Activated CD8-positive, alpha-beta memory T cell treated with anti-CD3 and anti-CD28 coated beads, Interleukin-2, amount 10 ng/mL, durations not matched to agents 7 days and 5 days (primary cell): ENCODE measurements at regions of chr3 and their contacts with region 1.

Region 1: DNA sequence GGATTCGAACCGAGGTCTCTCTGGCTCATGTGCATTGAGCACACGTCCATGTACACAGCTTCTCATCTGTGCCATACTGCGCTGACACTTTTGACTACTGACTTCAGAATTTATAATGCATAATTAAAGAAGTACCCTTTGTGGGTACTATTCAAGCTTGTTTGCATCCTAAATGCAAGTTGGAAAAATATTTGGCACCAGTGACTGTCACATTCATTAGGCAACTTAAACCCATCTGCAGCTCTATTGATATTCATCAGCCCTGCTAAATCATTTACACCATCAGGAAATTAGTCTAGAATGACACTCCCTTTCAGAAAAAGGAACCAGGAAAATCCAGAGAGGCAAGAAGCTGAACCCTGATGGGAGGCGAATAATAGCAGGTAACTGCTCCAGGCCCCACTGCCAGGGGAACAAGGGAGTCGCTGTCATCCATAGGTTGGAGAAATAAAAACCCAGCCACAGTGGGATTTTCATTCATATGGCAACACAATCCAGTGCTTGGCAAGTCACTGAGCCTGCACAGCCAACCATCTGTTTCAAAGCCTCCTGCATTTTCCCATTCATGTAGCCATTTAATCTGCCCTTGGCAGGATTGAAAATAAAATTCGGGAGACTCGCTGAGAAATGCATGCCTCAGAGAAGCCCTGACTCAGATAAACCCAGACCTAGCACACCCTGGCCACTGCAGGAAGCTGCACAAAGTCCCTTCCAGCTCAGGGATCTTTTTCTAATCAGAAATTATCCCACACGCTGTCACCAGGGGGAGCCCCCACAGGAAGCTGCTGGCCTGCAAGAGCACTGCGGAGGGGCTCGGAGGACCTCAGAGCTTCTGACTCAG is 103.0 kb upstream of the VEPH1 start:
- DNase-seq: peak; percentile 77
- ATAC-seq: peak; percentile 89
- H3K4me3 Mint-ChIP-seq: no peak overlapping the region
- H3K27ac Mint-ChIP-seq: no peak overlapping the region
- H3K4me1 Mint-ChIP-seq: peaks cover 4% of the 10 kb centered on the region
- H3K27me3 Mint-ChIP-seq: peaks cover 9% of the 10 kb centered on the region

Region 2: DNA sequence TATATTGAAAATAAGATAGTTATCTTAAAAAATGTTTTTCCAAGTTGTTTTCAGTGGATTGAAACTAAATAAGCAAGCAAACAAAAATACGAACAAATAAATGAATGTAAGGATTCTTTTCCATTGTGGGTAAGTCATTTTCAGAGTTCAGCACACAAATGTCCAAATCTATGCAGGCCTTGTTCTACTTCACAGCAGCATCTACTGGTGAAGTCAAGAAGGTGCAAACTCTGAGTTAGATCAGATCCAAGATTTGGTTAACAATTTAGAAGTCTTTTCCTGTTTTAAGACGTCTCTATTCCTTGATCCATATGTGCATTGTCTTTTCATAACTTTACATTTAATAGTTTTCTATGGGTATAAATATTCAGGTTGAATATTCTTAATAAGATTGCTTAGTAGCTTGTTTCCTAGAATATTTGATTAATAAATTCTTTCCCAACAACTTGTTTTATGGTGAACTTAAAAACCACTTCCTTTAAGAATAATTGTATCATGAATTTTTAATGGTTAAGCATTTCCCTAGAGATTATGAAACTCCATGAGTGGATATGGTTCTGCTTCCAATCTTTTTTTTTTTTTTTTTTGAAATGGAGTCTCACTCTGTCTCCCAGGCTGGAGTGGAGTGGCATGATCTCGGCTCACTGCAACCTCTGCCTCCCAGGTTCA is 159.1 kb before region 1 on chr3:
- CTCF ChIA-PET with region 1: no interaction called
- DNase-seq: no peak
- ATAC-seq: no peak
- H3K4me3 Mint-ChIP-seq: no peak overlapping the region
- H3K27ac Mint-ChIP-seq: no peak overlapping the region
- H3K4me1 Mint-ChIP-seq: no peaks in the 10 kb centered on the region
- H3K27me3 Mint-ChIP-seq: peaks cover 6% of the 10 kb centered on the region

Region 3: GRCh38 chr3:157618886-157619285 is 12.7 kb after region 1 on chr3:
- CTCF ChIA-PET with region 1: interaction called, 12 read pairs
- DNase-seq: no peak
- ATAC-seq: no peak
- H3K4me3 Mint-ChIP-seq: no peak overlapping the region
- H3K27ac Mint-ChIP-seq: no peak overlapping the region
- H3K4me1 Mint-ChIP-seq: peaks cover 4% of the 10 kb centered on the region
- H3K27me3 Mint-ChIP-seq: peaks cover 16% of the 10 kb centered on the region